Gastrocnemius medialis (tissue), 4 donors: ENCODE measurements at regions of chr22 and their contacts with region 1.

Region 1: DNA sequence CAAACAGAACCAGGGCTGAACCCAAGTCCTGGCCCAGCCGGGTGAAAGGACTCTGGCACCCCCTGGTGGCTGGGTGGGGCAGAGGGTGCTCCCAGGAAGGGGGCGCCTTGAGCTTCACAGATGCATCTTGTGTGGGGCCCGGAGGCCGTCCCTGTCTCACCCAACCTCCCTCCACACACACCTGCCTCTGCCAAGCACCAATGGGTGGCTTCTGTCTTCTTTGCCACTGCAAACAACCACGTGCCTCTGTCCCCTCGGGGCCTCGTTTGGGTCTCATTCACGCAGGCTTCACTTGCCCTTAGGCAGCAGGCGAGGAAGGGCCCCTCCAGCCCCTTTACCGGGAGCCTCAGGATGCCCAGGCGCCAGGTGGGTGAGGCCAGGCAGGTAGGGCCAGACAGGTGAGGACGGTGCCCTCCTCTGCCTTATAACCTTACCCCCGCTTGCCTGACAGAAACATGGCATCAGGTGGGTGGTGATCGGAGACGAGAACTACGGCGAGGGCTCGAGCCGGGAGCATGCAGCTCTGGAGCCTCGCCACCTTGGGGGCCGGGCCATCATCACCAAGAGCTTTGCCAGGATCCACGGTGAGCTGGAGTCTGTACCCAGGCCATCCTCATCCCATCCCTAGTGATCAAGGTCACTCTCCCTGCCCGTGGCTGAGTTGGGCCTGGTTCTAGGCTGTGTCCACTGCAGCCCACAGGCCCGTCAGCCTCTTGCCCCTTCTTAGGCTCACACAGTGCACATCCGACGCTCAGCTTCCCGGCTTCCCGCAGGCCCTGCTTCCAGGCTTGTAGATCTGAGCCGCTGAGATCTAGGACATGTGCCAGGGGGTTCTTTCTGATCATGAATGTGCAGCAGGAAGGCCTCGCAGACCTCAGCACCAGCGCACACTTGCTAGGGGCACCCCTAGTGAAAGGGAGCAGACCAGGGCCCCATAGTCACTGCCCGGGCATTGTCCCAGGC is 17.2 kb downstream of the POLR3H start:
- DNase-seq: peak in 1 of 2 donors; percentile 61
- ATAC-seq: peak; percentile 23 to 48
- H3K4me3 ChIP-seq: no peak overlapping the region
- H3K27ac ChIP-seq: peak overlapping the region; percentile 73 to 96 (median 84)
- H3K4me1 ChIP-seq: peaks cover 26 to 31% of the 10 kb centered on the region in 2 donors
- H3K27me3 ChIP-seq: no peaks in the 10 kb centered on the region
- CTCF ChIP-seq: peak; percentile 89 to 94 (median 92)
- POLR2A ChIP-seq: no peak

Region 2: DNA sequence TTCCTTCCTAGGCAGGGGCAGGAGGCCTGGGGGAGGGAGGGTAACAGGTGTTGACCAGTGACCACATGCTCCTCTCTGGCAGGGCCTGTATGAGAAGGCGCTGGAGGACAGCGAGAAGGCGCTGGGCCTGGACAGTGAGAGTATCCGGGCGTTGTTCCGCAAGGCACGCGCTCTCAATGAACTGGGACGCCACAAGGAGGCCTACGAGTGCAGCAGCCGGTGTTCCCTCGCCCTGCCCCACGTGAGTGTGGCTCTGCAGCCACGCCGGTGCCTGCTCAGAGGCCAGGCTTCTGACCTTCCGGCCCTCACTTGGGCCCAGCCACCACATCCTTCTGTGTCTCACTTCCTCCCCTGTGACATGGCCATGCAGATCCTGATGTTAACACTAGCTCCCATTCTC is 200.0 kb before region 1 on chr22:
- in situ Hi-C with region 1: no loop called
- intact Hi-C with region 1: loop called (anchors 5 kb)
- DNase-seq: peak; percentile 93 to 97
- ATAC-seq: peak; percentile 95 to 96
- H3K4me3 ChIP-seq: no peak overlapping the region
- H3K27ac ChIP-seq: peak overlapping the region; percentile 88 to 95 (median 92)
- H3K4me1 ChIP-seq: peaks cover 18 to 19% of the 10 kb centered on the region in 2 donors
- H3K27me3 ChIP-seq: no peaks in the 10 kb centered on the region
- CTCF ChIP-seq: peak in 4 of 5 experiments; percentile 41 to 64 (median 52)
- POLR2A ChIP-seq: peak in 1 of 2 donors; percentile 42

Region 3: GRCh38 chr22:41403532-41404318 is 123.4 kb before region 1 on chr22:
- in situ Hi-C with region 1: loop called in 1 of 4 experiments (anchors 5 kb)
- intact Hi-C with region 1: loop called (anchors 1 kb)
- DNase-seq: peak; percentile 96 to 99
- ATAC-seq: peak; percentile 74 to 90
- H3K4me3 ChIP-seq: no peak overlapping the region
- H3K27ac ChIP-seq: peak overlapping the region; percentile 78 to 88 (median 83)
- H3K4me1 ChIP-seq: peaks cover 22 to 26% of the 10 kb centered on the region in 2 donors
- H3K27me3 ChIP-seq: no peaks in the 10 kb centered on the region
- CTCF ChIP-seq: peak; percentile 98 to 99 (median 99)
- POLR2A ChIP-seq: no peak

Region 4: GRCh38 chr22:41442240-41442792 is 84.8 kb before region 1 on chr22:
- in situ Hi-C with region 1: no loop called
- intact Hi-C with region 1: no loop called
- DNase-seq: no peak
- ATAC-seq: no peak
- H3K4me3 ChIP-seq: peak overlapping the region in 2 of 4 donors; percentile 66 to 93
- H3K27ac ChIP-seq: peak overlapping the region; percentile 92 to 100 (median 99)
- H3K4me1 ChIP-seq: peaks cover 60 to 63% of the 10 kb centered on the region in 2 donors
- H3K27me3 ChIP-seq: no peaks in the 10 kb centered on the region
- CTCF ChIP-seq: no peak
- POLR2A ChIP-seq: no peak

Region 5: DNA sequence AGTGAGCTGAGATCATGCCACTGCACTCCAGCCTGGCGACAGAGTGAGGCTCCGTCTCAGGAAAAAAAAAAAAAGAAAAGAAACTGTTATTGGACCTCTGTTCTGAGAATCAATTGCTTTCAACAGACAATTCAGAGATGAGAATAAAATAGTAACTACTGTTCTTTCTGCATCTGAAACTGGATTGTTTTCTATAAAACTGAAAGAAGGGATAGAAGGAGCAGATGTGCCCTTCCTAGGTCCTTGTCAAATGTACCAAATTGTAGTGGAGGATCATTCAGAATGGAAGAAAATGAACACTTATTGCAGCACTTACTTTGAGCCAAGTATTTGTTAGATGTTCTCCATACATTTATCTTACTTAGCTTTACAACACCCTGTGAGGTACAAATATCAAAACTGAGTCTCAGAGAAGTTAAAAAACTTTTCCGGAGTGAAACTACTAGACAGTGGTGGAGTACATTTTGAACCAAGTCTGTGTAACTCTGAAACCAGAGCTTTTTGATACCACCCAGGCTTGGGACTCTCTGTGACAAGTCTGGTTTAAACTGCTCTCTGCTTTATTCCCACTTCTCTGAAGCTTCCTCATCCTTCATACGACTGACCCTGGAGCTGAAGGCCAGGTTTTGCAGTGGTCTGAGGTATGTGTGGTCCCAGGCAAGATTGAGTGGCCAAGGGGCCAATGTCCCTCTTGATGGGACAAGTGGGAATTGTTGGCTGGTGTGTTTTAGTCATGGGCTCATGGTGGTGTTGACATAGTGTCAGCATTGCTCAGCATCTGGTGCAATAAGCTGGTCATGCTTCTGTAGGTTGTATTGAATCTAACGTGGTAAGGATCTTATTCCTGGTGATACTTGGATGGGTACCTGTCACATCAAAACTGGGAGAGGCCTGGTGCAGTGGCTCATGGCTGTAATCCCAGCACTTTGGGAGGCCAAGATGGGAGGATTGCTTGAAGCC is 225.2 kb after region 1 on chr22:
- in situ Hi-C with region 1: no loop called
- intact Hi-C with region 1: no loop called
- DNase-seq: no peak
- ATAC-seq: no peak
- H3K4me3 ChIP-seq: no peak overlapping the region
- H3K27ac ChIP-seq: no peak overlapping the region
- H3K4me1 ChIP-seq: no peaks in the 10 kb centered on the region
- H3K27me3 ChIP-seq: no peaks in the 10 kb centered on the region
- CTCF ChIP-seq: no peak
- POLR2A ChIP-seq: no peak